ENCODE measurements at regions of chr19 and their contacts with region 1.

Region 1: DNA sequence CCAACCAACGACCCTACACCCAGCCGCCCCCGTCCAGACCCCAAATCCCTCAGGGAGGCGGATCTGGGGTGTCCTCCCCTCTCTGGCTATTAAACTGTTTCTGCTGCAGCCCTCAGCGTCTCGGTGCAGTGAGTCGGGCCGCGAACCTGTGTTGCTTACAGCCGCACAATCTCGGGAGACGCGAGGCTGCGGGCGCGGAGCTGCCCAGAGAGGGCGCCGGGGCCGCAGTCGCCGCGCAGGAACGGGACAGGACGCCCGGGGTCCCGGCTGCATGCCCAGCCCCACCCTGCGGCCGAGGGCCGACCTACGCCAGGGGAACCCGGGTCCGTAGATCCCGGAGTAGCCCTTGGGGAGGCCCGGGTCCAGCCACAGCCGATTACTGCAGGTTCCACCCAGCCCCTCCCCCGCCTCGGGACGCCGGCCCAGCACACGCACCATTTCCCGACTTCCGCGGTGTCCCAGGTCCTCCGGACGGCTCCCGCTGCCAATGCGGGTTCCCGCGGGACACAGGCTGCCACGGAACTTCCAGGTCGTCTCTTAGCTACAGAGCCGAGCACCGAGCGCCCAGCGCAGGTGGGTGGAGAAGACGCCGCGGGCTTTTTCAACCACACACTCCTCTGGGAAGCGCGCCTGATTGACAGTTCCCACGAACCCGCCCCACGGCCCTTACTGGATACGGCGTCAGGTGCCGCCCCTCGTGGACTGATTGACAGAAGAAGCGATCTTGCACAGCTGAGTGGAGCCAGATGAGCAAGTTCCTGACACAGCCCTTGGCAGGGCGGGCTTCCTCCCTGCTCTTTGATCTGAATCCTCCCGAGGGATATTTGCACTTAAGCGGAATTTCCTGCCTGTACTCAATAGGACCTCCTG is at the start of gene ZNF799:
- DNase-seq: peak; percentile 98
- H3K4me3 ChIP-seq: peak within 1 kb of the TSS; percentile 51 to 92 (median 80)
- H3K27ac ChIP-seq: peak within 1 kb of the TSS; percentile 40
- H3K4me1 ChIP-seq: no peaks in the 10 kb centered on the region
- H3K27me3 ChIP-seq: no peaks in the 10 kb centered on the region
- CTCF ChIP-seq: peak in 1 of 2 donors; percentile 11
- total RNA-seq, gene ZNF799: 2.6 to 3.5 TPM

Region 2: DNA sequence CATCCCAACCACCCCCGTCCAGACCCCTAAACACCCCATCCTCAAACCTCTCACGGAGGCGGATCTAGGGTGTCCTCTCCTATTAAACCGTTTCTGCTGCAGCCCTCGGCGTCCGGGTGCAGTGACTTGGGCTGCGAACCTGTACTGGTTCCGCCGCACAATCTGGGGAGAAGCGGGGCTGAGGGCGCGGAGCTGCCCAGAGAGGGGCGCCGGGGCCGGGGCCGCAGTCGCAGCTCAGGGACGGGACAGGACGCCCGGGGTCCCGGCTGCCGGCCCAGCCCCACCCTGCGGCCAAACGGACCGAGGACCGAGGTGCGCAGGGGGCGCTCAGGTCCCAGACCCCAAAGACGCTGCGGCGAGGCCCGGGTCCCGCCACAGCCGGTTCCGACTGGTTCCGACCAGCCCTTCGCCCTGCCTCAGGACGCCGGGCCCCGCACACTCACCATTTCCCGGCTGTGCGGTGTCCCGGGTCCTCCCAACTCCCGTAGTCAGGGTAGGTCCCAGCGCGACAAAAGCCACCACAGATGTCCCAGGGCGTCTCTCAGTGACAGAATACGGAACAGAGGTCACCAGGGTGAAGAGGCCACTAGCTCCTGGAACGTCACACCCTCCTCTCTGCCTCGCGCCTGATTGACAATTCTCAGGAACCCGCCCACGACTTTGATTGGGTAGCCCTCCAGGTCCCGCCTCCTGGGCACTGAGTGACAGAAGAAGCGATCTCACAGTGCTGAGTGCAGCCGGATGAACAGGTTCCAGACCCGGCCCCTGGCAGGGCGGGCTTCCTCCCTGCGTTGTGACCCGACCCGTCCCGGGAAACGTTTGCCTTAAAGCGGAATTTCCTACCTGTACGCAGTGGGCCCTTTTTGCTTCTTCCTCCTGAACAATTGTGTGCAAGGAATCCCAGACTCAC is 106.4 kb before region 1 on chr19 and contains the start of gene ZNF44:
- CTCF ChIA-PET with region 1: no interaction called
- dilution Hi-C with region 1: no loop called
- in situ Hi-C with region 1: no loop called
- intact Hi-C with region 1: loop called (anchors 1 kb)
- DNase-seq: peak; percentile 95
- H3K4me3 ChIP-seq: peak within 1 kb of the TSS; percentile 72 to 82 (median 73)
- H3K27ac ChIP-seq: peak within 1 kb of the TSS; percentile 66
- H3K4me1 ChIP-seq: peaks cover 9% of the 10 kb centered on the region
- H3K27me3 ChIP-seq: no peaks in the 10 kb centered on the region
- CTCF ChIP-seq: no peak
- total RNA-seq, gene ZNF44: 6.6 to 7.3 TPM